A673 (cell line): ENCODE measurements at regions of chr21 and their contacts with region 1.

Region 1: GRCh38 chr21:15713412-15713811 is 16.4 kb upstream of the USP25 start:
- DNase-seq: no peak
- H3K4me3 ChIP-seq: no peak overlapping the region
- H3K27ac ChIP-seq: no peak overlapping the region
- H3K4me1 ChIP-seq: no peaks in the 10 kb centered on the region
- H3K27me3 ChIP-seq: no peaks in the 10 kb centered on the region
- CTCF ChIP-seq: no peak

Region 2: DNA sequence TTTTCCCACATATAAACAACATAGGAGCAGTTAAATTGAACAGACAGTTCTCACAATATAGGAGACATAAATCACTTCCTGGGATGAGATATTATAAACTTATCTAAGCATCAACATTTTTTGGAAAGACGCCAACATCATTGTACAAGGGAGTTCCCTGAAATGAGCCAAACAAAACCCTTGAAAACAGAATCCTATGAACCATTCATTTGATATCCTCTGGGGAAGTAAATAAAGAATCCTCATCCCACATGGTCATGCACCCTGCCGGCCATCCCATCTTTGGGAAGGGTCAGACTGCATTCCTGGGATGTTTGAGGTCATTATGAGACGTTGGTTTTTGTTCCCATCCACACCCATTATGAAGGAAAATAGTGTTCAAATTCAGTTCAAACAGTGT is 95.4 kb before region 1 on chr21:
- CTCF ChIA-PET with region 1: interaction called, 18 read pairs
- POLR2A ChIA-PET with region 1: interaction called, 13 read pairs
- intact Hi-C with region 1: no loop called
- DNase-seq: peak; percentile 22
- H3K4me3 ChIP-seq: no peak overlapping the region
- H3K27ac ChIP-seq: no peak overlapping the region
- H3K4me1 ChIP-seq: peaks cover 18% of the 10 kb centered on the region
- H3K27me3 ChIP-seq: no peaks in the 10 kb centered on the region
- CTCF ChIP-seq: no peak